GM18951 (cell line): ENCODE measurements at regions of chr13 and their contacts with region 1.

Region 1: GRCh38 chr13:18212873-18213272 is 968.8 kb downstream of the TUBA3C start:
- POLR2A ChIP-seq: no peak

Region 2: GRCh38 chr13:18739310-18739709 is 526.4 kb after region 1 on chr13:
- in situ Hi-C with region 1: loop called (anchors 10 kb)
- POLR2A ChIP-seq: no peak

Region 3: DNA sequence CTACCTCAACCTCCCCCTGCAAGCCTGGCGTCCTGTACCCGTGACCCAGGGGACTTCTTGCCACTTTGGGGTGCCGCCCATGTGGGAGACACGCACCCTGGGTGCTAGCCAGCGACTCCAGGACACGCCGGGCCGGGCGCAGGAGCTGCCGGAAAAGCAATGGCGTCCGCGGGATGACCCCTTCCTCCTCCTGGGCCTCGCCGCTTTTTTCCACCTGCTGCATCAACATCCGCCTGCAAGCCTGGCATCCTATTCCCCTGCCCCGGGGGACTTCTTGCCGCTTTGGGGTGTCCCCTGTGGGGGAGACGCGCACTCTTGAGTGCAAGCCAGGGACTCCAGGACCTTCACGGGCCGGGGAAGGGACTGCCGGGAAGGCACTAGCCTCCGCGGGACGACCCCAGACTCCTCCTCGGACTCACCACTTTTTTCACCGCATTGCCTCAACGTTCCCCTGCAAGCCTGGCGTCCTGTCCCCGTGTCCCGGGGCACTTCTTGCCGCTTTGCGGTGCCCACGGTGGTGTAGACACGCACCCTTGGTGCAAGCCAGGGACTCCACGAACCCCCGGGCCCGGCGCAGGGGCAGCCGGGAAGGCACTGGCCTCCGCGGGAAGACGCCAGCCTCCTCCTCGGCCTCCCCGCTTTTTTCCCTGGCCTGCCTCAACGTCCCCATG is 731.0 kb after region 1 on chr13:
- in situ Hi-C with region 1: no loop called
- POLR2A ChIP-seq: no peak